Esophagus squamous epithelium (tissue), 5 donors: ENCODE measurements at regions of chr16 and their contacts with region 1.

Region 1: DNA sequence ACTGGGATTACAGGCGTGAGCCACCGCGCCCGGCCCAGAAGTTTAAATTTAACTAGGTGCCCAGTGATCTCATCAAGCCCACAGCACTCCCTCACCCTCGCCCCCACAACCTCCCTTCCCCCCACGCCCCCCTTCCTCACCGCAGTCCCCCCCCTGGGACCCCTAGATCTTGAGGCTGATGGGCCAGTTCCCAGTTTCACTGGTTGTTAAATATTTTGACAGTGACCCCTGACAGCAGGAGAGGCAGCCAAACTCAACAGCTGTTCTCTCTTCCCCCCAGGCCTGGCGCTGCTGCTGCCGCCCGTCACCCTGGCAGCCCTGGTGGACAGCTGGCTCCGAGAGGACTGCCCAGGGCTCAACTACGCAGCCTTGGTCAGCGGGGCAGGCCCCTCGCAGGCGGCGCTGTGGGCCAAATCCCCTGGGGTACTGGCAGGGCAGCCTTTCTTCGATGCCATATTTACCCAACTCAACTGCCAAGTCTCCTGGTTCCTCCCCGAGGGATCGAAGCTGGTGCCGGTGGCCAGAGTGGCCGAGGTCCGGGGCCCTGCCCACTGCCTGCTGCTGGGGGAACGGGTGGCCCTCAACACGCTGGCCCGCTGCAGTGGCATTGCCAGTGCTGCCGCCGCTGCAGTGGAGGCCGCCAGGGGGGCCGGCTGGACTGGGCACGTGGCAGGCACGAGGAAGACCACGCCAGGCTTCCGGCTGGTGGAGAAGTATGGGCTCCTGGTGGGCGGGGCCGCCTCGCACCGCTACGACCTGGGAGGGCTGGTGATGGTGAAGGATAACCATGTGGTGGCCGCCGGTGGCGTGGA is 15.6 kb downstream of the QPRT start:
- DNase-seq: no peak
- H3K4me3 ChIP-seq: no peak overlapping the region
- H3K27ac ChIP-seq: peak overlapping the region in 3 of 4 donors; percentile 1 to 36 (median 14)
- H3K4me1 ChIP-seq: peaks cover 0 to 7% (median 0%) of the 10 kb centered on the region in 3 donors
- H3K27me3 ChIP-seq: no peaks in the 10 kb centered on the region
- CTCF ChIP-seq: no peak
- POLR2A ChIP-seq: no peak

Region 2: GRCh38 chr16:30028438-30029076 is 334.0 kb after region 1 on chr16:
- intact Hi-C with region 1: loop called (anchors 5 kb)
- DNase-seq: no peak
- H3K4me3 ChIP-seq: no peak overlapping the region
- H3K27ac ChIP-seq: no peak overlapping the region
- H3K4me1 ChIP-seq: peaks cover 6 to 14% (median 11%) of the 10 kb centered on the region in 3 donors
- H3K27me3 ChIP-seq: peaks cover 0 to 98% (median 17%) of the 10 kb centered on the region in 4 donors
- CTCF ChIP-seq: no peak
- POLR2A ChIP-seq: no peak